Ascending aorta (tissue), 2 donors: ENCODE measurements at regions of chr6 and their contacts with region 1.

Region 1: GRCh38 chr6:169701954-169702839 is at the starts of genes C6orf120 and WDR27:
- DNase-seq: peak; percentile 91 to 98
- H3K4me3 ChIP-seq: peak within 1 kb of the TSS; percentile 70 to 83
- H3K27ac ChIP-seq: peak within 1 kb of the TSS; percentile 91 to 99
- H3K4me1 ChIP-seq: peaks cover 0 to 16% of the 10 kb centered on the region in 2 donors
- H3K27me3 ChIP-seq: no peaks in the 10 kb centered on the region
- CTCF ChIP-seq: no peak
- total RNA-seq, gene C6orf120: 36.2 TPM
- total RNA-seq, gene WDR27: 92.7 TPM

Region 2: DNA sequence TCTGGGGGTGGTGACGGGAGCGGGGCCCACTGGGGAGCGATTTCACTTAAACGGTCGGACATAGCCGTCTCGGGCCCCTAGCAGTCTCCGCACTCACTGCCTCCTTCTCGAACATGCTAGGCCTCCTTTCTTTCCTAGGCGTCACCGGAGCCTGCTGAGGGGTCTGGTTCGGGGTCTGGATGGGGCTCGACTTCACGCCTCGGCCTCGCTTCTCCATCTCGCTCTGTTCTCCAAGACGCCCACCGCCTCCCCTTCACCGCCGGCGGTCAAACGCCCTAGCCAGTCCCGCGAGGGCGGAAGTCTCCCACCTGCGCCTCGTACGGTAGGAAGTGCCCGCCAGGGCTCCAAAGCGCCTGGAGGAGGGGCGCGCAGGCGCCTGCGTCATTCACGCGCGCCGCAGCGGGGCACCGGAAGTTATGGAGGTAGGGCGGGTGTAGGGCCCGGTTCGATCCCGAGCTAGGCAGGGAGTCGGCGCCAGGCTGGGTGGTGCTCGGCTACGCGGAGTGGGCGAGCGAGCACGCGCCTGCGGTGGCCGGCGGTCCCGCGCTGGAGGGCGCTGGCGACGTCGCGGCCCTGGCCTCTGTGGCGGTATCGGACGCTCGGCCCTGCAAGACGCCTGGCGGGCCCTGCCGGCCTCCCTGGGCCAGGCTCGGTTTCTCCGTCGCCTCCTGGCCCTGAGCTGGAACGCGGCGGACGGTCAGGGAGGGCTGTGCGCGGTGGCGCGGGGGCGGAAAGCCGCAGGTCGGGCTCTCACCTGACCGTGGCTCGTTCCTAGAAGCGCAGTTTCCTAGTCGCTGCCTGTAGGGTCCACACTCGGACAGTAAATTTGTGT is 49.3 kb after region 1 on chr6 and contains the starts of genes DYNLT2 and ERMARD:
- intact Hi-C with region 1: loop called (anchors 1 kb)
- DNase-seq: peak; percentile 78 to 96
- H3K4me3 ChIP-seq: peak within 1 kb of the TSS; percentile 91
- H3K27ac ChIP-seq: peak within 1 kb of the TSS; percentile 97 to 98
- H3K4me1 ChIP-seq: peaks cover 2 to 13% of the 10 kb centered on the region in 2 donors
- H3K27me3 ChIP-seq: no peaks in the 10 kb centered on the region
- CTCF ChIP-seq: peak; percentile 3 to 27 (median 3)
- total RNA-seq, gene DYNLT2: 0.21 TPM
- total RNA-seq, gene ERMARD: 4.0 TPM